ENCODE measurements at regions of chr1 and their contacts with region 1.

Region 1: GRCh38 chr1:24688621-24689195 is 45.6 kb downstream of the SRRM1 start:
- DNase-seq: peak; percentile 79
- ATAC-seq: peak; percentile 92
- H3K4me3 Mint-ChIP-seq: no peak overlapping the region
- H3K27ac Mint-ChIP-seq: peak overlapping the region; percentile 0; the same call in 1 of the 2 replicates
- H3K4me1 Mint-ChIP-seq: peaks cover 10% of the 10 kb centered on the region
- H3K27me3 Mint-ChIP-seq: no peaks in the 10 kb centered on the region; the same call in 1 of the 2 replicates
- CTCF ChIP-seq: peak; percentile 64

Region 2: GRCh38 chr1:24656046-24656445 is 32.7 kb before region 1 on chr1:
- CTCF ChIA-PET with region 1: no interaction called
- POLR2A ChIA-PET with region 1: no interaction called
- DNase-seq: no peak
- ATAC-seq: no peak
- H3K4me3 Mint-ChIP-seq: no peak overlapping the region
- H3K27ac Mint-ChIP-seq: no peak overlapping the region
- H3K4me1 Mint-ChIP-seq: no peaks in the 10 kb centered on the region
- H3K27me3 Mint-ChIP-seq: no peaks in the 10 kb centered on the region
- CTCF ChIP-seq: no peak

Region 3: GRCh38 chr1:24699628-24700027 is 10.9 kb after region 1 on chr1:
- CTCF ChIA-PET with region 1: interaction called, 33 read pairs
- POLR2A ChIA-PET with region 1: interaction called, 5 read pairs
- DNase-seq: no peak
- ATAC-seq: no peak
- H3K4me3 Mint-ChIP-seq: no peak overlapping the region
- H3K27ac Mint-ChIP-seq: peak overlapping the region; percentile 65
- H3K4me1 Mint-ChIP-seq: peaks cover 24% of the 10 kb centered on the region
- H3K27me3 Mint-ChIP-seq: no peaks in the 10 kb centered on the region
- CTCF ChIP-seq: no peak

Region 4: DNA sequence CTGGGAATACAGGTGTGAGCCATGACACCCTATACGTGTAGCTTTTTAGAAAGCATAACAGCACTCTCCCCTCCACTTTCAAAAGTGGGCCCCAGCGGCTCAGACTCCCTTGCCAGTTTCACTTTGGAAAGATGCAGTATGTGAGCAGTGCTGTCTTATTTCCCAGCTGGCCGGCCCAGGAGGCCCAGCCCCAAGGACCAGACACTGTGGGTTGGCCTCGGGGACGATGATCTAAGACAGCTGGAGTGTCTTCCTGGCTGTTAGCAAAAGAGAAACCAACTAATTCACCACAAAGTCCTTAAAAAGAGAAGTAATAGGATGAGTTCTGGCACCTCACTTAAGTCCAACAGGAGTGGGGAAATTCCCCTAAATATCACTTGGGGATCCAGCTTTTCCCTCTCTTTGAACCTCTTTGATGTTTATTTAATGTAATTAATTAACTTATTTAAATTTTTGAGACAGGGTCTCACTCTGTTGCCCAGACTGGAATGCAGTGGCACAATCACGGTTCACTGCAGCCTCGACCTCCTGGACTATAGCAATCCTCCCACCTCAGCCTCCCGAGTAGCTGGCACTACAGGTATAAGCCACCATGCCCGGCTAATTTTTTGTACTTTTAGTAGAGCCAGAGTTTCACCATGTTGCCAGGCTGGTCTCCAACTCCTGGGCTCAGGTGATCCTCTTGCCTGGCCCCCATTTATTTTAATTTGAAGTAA is 39.0 kb after region 1 on chr1:
- CTCF ChIA-PET with region 1: interaction called, 23 read pairs
- POLR2A ChIA-PET with region 1: interaction called, 3 read pairs
- DNase-seq: no peak
- ATAC-seq: no peak
- H3K4me3 Mint-ChIP-seq: no peak overlapping the region
- H3K27ac Mint-ChIP-seq: no peak overlapping the region
- H3K4me1 Mint-ChIP-seq: peaks cover 52% of the 10 kb centered on the region
- H3K27me3 Mint-ChIP-seq: no peaks in the 10 kb centered on the region
- CTCF ChIP-seq: no peak

Region 5: DNA sequence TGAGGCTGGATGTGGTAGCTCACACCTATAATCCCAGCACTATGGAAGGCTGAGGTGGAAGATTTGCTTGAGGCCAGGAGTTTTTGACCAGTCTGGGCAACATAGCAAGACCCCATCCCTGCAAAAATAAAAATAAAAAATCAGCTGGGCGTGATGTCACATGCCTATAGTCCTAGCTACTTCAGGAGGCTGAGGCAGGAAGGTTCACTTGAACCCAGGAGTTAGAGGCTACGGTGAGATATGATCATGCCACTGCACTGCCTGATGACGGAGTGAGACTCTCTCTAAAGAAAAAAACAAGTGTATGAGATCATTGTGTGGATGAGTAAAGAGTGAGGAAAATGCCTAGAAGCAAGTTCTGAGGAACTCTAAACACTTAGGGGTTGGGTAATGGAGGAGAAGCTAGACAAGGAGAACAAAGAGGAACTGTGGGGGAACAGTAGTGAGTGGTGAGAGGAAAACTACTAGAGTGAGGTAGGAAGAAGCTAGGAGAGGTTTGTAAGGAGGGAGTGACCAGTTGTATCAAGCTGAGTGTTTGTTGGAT is 73.5 kb after region 1 on chr1:
- CTCF ChIA-PET with region 1: interaction called, 12 read pairs
- POLR2A ChIA-PET with region 1: interaction called, 6 read pairs
- DNase-seq: no peak
- ATAC-seq: no peak
- H3K4me3 Mint-ChIP-seq: no peak overlapping the region
- H3K27ac Mint-ChIP-seq: no peak overlapping the region
- H3K4me1 Mint-ChIP-seq: peaks cover 14% of the 10 kb centered on the region
- H3K27me3 Mint-ChIP-seq: no peaks in the 10 kb centered on the region
- CTCF ChIP-seq: no peak

Region 6: GRCh38 chr1:24796524-24796923 is 107.8 kb after region 1 on chr1:
- CTCF ChIA-PET with region 1: no interaction called
- POLR2A ChIA-PET with region 1: no interaction called
- DNase-seq: no peak
- ATAC-seq: no peak
- H3K4me3 Mint-ChIP-seq: no peak overlapping the region
- H3K27ac Mint-ChIP-seq: no peak overlapping the region
- H3K4me1 Mint-ChIP-seq: peaks cover 17% of the 10 kb centered on the region
- H3K27me3 Mint-ChIP-seq: no peaks in the 10 kb centered on the region
- CTCF ChIP-seq: no peak

Region 7: DNA sequence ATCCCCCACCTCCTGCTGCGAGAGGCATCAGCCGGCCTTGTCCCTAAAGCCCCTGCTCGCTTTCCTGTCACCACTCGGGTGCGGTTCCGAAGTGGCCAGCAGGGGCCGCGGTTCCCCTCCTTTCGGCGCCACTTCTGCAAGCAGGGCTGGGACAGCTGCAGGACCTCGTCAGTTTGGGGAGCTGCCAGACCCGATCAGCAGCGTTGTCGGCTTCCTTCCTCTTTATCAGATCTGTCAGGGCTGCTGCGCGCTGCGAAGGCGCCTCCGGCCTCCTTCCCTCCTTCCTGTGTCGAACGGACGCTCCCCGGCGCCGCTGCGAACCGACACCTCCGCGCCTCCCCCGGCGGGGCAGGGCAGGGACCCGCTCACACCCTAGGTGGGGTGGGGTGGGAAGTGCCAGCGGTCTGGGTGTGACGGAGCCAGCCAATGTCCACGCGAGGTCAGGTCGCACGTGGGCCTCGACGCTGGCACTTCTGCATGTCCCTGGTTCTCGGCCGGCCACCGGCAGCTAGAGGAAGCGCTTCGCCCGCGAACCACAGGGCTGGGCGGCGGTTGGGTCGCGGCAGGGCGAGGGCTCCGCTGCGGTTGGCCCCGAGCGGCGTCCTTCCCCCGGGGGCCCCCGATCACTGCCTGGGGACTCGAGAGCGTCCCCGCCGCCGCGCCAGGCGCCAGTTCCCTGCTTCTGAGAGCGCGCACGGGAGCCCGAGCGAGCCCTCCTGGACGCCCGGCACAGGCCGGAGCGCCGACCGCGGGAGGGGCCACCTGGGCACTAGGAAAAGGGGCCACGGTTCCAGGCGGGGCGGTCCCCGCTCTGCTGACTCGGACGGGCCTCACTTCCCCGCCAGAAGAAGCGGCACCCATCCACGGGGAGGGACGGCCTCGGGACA is 159.5 kb after region 1 on chr1:
- CTCF ChIA-PET with region 1: interaction called, 21 read pairs
- POLR2A ChIA-PET with region 1: no interaction called
- DNase-seq: peak; percentile 97
- ATAC-seq: peak; percentile 88
- H3K4me3 Mint-ChIP-seq: peak overlapping the region; percentile 67
- H3K27ac Mint-ChIP-seq: no peak overlapping the region
- H3K4me1 Mint-ChIP-seq: 0 out of 2 replicates have a peak, but pooled peaks cover 3% of the 10 kb centered on the region
- H3K27me3 Mint-ChIP-seq: peaks cover 13% of the 10 kb centered on the region
- CTCF ChIP-seq: peak; percentile 83

Region 8: GRCh38 chr1:24930204-24931145 is 241.8 kb after region 1 on chr1 and contains the start of gene RUNX3:
- CTCF ChIA-PET with region 1: interaction called, 16 read pairs
- POLR2A ChIA-PET with region 1: interaction called, 11 read pairs
- DNase-seq: peak; percentile 74
- ATAC-seq: peak; percentile 45
- H3K4me3 Mint-ChIP-seq: peak within 1 kb of the TSS; percentile 71
- H3K27ac Mint-ChIP-seq: no peak within 1 kb of the TSS
- H3K4me1 Mint-ChIP-seq: peaks cover 68% of the 10 kb centered on the region
- H3K27me3 Mint-ChIP-seq: peaks cover 91% of the 10 kb centered on the region
- CTCF ChIP-seq: no peak
- total RNA-seq, gene RUNX3: 1.5 to 1.8 TPM (median 1.8 TPM) in 3 replicates